WTC11 (cell line): ENCODE measurements at regions of chr6 and their contacts with region 1.

Region 1: GRCh38 chr6:26270903-26271667 is 93.9 kb upstream of the BTN3A2 start:
- DNase-seq: peak; percentile 65
- ATAC-seq: peak; percentile 28
- H3K4me3 Mint-ChIP-seq: no peak overlapping the region
- H3K27ac Mint-ChIP-seq: no peak overlapping the region
- H3K4me1 Mint-ChIP-seq: peaks cover 35% of the 10 kb centered on the region
- H3K27me3 Mint-ChIP-seq: no peaks in the 10 kb centered on the region
- CTCF ChIP-seq: no peak

Region 2: GRCh38 chr6:26025894-26026832 is 244.9 kb before region 1 on chr6:
- CTCF ChIA-PET with region 1: no interaction called
- POLR2A ChIA-PET with region 1: interaction called, 22 read pairs
- DNase-seq: peak; percentile 95
- ATAC-seq: peak; percentile 12
- H3K4me3 Mint-ChIP-seq: peak overlapping the region; percentile 92
- H3K27ac Mint-ChIP-seq: peak overlapping the region; percentile 98
- H3K4me1 Mint-ChIP-seq: peaks cover 73% of the 10 kb centered on the region
- H3K27me3 Mint-ChIP-seq: no peaks in the 10 kb centered on the region
- CTCF ChIP-seq: peak; percentile 60

Region 3: DNA sequence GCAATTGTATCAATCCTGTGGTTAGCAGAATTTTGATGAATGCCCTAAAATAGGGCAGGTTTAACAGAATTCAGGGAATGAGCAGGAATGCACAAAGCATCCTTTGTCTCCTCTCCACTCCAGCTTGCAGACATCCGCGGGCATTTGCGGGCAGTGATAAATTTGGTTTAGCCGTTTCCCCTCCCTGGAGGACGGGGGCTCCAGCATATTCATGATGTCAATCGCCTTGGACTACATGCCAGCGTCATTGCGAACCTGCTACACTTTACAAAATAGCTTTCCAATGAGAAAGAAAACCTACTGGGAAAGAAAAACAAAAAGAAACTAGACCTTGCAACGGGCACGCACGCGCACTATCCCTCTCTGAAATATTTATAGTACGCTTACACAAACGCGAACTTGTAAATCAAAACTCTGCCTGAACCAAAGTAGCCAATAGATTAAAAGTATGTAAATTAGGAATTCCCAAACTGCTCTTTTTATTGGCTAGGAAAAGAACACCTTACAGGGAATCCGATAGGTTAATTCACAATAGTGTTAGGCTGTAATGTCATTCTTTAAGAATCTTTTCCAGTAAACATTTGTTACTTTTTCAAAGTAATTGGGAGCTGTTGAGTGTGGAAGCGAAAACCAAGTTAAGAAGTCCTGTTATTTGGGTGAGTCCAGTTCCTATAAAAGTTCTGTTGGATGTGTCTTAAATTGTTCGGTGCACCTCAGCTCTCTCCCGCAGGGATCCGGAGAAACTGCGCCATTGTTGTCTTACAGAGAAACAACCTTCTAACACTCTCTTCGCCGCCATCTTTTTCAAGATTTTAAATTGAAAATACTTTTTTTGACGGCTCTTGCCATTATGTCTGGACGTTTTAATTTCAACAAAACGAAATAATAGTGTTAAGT is 47.2 kb before region 1 on chr6:
- CTCF ChIA-PET with region 1: no interaction called
- POLR2A ChIA-PET with region 1: interaction called, 151 read pairs
- DNase-seq: no peak
- ATAC-seq: peak; percentile 69
- H3K4me3 Mint-ChIP-seq: no peak overlapping the region
- H3K27ac Mint-ChIP-seq: no peak overlapping the region
- H3K4me1 Mint-ChIP-seq: peaks cover 42% of the 10 kb centered on the region
- H3K27me3 Mint-ChIP-seq: no peaks in the 10 kb centered on the region
- CTCF ChIP-seq: no peak

Region 4: DNA sequence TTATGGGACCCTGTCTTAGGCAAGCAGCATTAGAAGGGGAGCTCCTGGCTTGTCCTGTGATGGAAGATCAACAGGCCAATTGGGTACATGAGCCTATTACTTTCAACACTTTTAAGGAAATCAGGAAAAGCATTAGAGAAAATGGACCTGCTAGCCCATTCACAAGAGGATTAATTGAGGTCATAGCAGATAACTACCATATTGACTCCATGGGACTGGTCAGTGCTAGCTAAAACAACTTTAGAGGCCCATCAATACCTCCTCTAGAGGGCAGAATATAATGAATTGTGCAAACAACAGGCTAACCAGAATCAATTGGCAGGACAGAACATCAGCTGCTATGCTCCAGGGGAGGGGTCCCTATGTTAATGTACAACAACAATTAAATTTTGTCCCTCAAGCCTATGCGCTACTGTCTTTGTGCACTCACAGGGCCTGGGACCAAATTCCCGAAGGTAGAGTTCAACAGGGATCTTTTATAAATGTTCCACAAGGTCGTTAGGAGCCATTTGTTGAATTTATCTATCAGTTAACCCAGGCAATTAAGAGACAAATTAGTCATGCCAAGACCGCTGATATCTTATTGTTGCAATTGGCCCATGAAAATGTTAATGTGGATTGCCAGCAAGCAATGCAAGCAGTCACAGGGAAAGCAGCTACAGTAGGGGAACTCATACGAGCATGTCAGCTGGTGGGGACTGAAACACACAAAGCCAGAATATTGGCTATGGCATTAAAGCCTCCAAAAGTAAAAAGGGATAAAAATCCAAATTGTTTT is 12.7 kb before region 1 on chr6:
- CTCF ChIA-PET with region 1: interaction called, 16 read pairs
- POLR2A ChIA-PET with region 1: interaction called, 4 read pairs
- DNase-seq: no peak
- ATAC-seq: peak; percentile 40
- H3K4me3 Mint-ChIP-seq: no peak overlapping the region
- H3K27ac Mint-ChIP-seq: peak overlapping the region; percentile 44; the same call in 1 of the 2 replicates
- H3K4me1 Mint-ChIP-seq: peaks cover 34% of the 10 kb centered on the region
- H3K27me3 Mint-ChIP-seq: no peaks in the 10 kb centered on the region
- CTCF ChIP-seq: no peak

Region 5: GRCh38 chr6:27132532-27133280 is 861.6 kb after region 1 on chr6:
- CTCF ChIA-PET with region 1: no interaction called
- POLR2A ChIA-PET with region 1: interaction called, 22 read pairs
- DNase-seq: peak; percentile 85
- ATAC-seq: peak; percentile 86
- H3K4me3 Mint-ChIP-seq: no peak overlapping the region
- H3K27ac Mint-ChIP-seq: no peak overlapping the region
- H3K4me1 Mint-ChIP-seq: peaks cover 65% of the 10 kb centered on the region
- H3K27me3 Mint-ChIP-seq: no peaks in the 10 kb centered on the region
- CTCF ChIP-seq: no peak

Region 6: GRCh38 chr6:27809939-27810767 is 1539.1 kb after region 1 on chr6:
- CTCF ChIA-PET with region 1: no interaction called
- POLR2A ChIA-PET with region 1: interaction called, 33 read pairs
- DNase-seq: peak; percentile 58
- ATAC-seq: peak; percentile 7
- H3K4me3 Mint-ChIP-seq: peak overlapping the region; percentile 98
- H3K27ac Mint-ChIP-seq: peak overlapping the region; percentile 98
- H3K4me1 Mint-ChIP-seq: peaks cover 45% of the 10 kb centered on the region
- H3K27me3 Mint-ChIP-seq: peaks cover 3% of the 10 kb centered on the region
- CTCF ChIP-seq: no peak